ENCODE measurements at regions of chr18 and their contacts with region 1.

Region 1: DNA sequence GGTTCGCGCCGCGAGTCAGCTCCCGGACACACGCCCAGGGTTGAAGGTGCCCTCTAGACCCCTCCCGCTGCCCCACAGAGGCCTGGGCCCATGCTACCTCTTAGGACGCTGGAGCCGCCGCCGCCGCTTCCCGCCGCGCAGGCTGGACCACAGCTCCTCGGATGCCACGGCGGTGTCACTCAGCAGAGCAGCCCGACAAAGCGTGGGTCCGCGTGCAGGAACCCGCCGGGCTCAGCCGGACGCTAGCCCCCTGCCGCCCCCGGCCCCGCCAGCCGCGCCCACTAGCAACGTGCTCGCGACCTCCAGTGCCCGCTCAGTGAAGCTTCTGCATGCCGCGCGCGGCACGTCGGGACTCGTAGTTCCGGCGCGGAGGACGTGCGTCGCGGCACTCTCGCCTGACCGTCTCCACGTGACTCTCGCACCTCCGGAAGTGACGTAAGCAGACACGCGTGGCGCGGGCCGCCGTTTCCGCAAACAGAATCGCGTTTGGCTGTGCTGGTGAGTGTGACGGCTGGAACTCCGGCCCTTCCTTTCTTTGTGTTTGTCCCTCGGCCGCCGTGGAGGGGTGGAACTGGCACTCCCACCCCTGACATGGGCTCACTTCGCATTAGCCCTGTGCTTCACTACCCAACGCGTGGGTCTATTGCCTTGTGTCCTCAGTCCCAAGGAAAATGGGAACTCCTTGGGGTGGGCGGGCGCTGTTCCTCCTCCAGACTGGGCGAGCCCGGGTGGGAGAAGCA is at the starts of genes FAM210A and RNMT:
- DNase-seq: peak; percentile 98
- H3K4me3 ChIP-seq: peak within 1 kb of the TSS; percentile 80 to 98 (median 94)
- H3K27ac ChIP-seq: peak within 1 kb of the TSS; percentile 93 to 95 (median 95)
- H3K4me1 ChIP-seq: peaks cover 0 to 31% (median 29%) of the 10 kb centered on the region in 4 donors
- H3K27me3 ChIP-seq: no peaks in the 10 kb centered on the region
- CTCF ChIP-seq: no peak
- EP300 ChIP-seq: peak in 2 of 4 donors; percentile 47 to 94
- POLR2A ChIP-seq: peak; percentile 51 to 63
- total RNA-seq, gene FAM210A: 9.0 to 19.6 (median 14.0) TPM
- total RNA-seq, gene RNMT: 16.1 to 22.3 (median 21.7) TPM

Region 2: GRCh38 chr18:12883684-12884405 is 842.6 kb before region 1 on chr18 and contains the start of gene PTPN2:
- intact Hi-C with region 1: loop called (anchors 5 kb)
- DNase-seq: peak; percentile 98
- H3K4me3 ChIP-seq: peak within 1 kb of the TSS; percentile 68 to 87 (median 77)
- H3K27ac ChIP-seq: peak within 1 kb of the TSS; percentile 95 to 100 (median 98)
- H3K4me1 ChIP-seq: peaks cover 0 to 26% (median 15%) of the 10 kb centered on the region in 4 donors
- H3K27me3 ChIP-seq: no peaks in the 10 kb centered on the region
- CTCF ChIP-seq: no peak
- EP300 ChIP-seq: peak in 1 of 4 donors; percentile 9
- POLR2A ChIP-seq: peak; percentile 82 to 85
- total RNA-seq, gene PTPN2: 20.0 to 31.0 (median 21.0) TPM

Region 3: DNA sequence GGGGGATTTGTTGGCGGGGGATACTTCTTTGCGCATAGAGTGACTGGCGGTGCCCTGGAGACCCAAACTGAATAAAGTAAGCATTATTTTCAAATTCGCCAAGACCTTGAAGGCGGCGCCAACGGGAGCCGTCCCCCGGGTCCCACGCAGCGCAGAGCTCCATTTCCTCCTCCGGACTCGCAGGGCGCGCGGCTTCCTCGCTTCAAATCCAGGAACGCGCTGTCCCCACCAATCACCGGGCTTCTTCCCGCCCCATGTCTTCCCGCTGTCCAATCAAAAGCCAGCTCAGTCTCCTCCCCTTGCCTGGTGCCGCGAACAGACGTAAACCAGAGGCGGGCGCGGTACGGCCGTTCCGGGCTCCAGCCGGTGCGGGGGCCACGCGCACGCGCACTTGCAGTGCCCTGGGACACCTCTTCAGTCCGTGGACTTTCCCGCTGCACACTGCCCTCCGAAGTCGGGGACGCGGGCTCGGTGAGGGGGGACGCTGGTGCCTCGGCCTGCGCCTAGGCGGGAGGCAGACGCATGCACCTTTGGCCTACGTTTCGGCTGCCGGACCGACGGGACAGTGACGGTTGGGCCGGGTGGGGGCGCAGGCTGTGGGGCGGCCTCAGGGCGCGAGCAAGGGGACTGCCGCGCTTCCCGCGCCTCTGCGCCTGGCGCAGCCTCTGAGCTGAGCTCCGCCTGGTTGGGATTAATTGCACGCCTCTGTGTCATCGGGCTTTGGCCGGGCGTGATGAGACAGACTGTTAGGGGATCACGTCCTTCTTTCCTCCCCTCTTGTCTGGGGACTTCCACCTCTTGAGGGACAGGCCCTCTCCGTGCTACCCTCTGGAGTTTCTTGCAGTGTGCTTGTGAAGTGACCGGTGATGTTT is 735.2 kb before region 1 on chr18 and contains the start of gene CEP192:
- intact Hi-C with region 1: loop called (anchors 5 kb)
- DNase-seq: peak; percentile 99
- H3K4me3 ChIP-seq: peak within 1 kb of the TSS; percentile 66 to 86 (median 71)
- H3K27ac ChIP-seq: peak within 1 kb of the TSS; percentile 81 to 88 (median 87)
- H3K4me1 ChIP-seq: peaks cover 0 to 29% (median 20%) of the 10 kb centered on the region in 4 donors
- H3K27me3 ChIP-seq: no peaks in the 10 kb centered on the region
- CTCF ChIP-seq: no peak
- EP300 ChIP-seq: no peak
- POLR2A ChIP-seq: peak; percentile 44 to 66
- total RNA-seq, gene CEP192: 19.8 to 30.4 (median 25.4) TPM

Region 4: GRCh38 chr18:13558124-13558523 is 168.3 kb before region 1 on chr18:
- intact Hi-C with region 1: loop called (anchors 5 kb)
- DNase-seq: no peak
- H3K4me3 ChIP-seq: no peak overlapping the region
- H3K27ac ChIP-seq: no peak overlapping the region
- H3K4me1 ChIP-seq: peaks cover 0 to 56% (median 43%) of the 10 kb centered on the region in 4 donors
- H3K27me3 ChIP-seq: no peaks in the 10 kb centered on the region
- CTCF ChIP-seq: peak; percentile 17 to 53 (median 36)
- EP300 ChIP-seq: no peak
- POLR2A ChIP-seq: no peak

Region 5: GRCh38 chr18:13653746-13654433 is 72.5 kb before region 1 on chr18:
- intact Hi-C with region 1: no loop called
- DNase-seq: no peak
- H3K4me3 ChIP-seq: no peak overlapping the region
- H3K27ac ChIP-seq: no peak overlapping the region
- H3K4me1 ChIP-seq: no peaks in the 10 kb centered on the region
- H3K27me3 ChIP-seq: no peaks in the 10 kb centered on the region
- CTCF ChIP-seq: no peak
- EP300 ChIP-seq: no peak
- POLR2A ChIP-seq: no peak

Region 6: DNA sequence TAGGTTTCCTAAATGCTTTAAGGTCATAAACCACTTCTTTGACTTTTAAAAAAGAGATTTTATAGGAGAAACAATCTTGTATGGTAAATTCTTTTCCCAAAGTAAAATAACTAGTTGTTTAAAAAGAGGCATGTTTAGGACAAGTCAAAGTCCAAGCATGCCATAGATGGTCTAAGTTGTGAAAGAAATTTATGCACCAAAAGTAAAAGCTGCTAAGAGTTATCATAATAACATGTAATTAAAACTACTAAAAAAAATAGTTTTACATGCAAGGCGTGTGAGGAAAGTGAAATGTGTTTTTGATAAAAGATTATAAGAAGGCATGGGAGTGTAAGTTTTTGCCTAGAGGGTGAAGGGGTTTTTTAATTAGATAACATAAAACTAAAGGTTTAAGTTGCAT is 22.5 kb before region 1 on chr18:
- intact Hi-C with region 1: no loop called
- DNase-seq: no peak
- H3K4me3 ChIP-seq: no peak overlapping the region
- H3K27ac ChIP-seq: no peak overlapping the region
- H3K4me1 ChIP-seq: no peaks in the 10 kb centered on the region
- H3K27me3 ChIP-seq: no peaks in the 10 kb centered on the region
- CTCF ChIP-seq: no peak
- EP300 ChIP-seq: no peak
- POLR2A ChIP-seq: no peak